ENCODE measurements at regions of chr3 and their contacts with region 1.

Region 1: DNA sequence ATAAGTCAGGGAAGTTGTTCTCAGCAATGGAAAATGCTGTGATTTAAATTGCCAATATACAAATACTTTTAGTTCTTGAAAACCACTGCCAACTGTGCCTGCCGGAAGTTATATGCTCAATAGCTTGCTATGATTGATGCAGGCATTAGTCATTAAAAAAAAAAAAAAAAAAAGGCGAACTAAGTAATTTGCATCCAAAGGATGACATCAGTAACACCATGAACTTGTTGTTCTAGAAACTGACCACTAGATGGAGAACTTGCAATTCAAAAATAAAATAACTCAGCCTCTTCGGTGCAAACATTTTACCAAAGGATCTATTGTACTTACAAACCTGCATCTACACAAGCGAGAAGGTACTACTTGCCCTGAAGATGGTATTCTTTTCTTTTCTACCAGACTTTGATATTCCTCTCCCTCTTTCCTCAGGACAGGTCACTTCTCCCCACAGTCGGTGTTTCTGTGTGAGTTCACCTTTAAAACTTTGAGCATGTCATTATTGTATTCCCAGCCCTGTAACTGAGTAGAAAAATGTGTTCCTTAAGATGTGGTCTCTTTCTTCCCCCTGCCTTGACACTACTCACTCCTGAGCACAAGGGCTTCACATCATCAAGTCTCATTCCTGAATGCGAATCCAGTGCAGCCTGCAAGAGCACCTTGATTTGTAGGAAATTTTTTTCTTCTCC is 115.0 kb upstream of the VEPH1 start:
- DNase-seq: peak; percentile 74
- H3K4me3 Mint-ChIP-seq: no peak overlapping the region
- H3K27ac Mint-ChIP-seq: no peak overlapping the region
- H3K4me1 Mint-ChIP-seq: no peaks in the 10 kb centered on the region
- H3K27me3 Mint-ChIP-seq: no peaks in the 10 kb centered on the region
- CTCF ChIP-seq: peak; percentile 41

Region 2: DNA sequence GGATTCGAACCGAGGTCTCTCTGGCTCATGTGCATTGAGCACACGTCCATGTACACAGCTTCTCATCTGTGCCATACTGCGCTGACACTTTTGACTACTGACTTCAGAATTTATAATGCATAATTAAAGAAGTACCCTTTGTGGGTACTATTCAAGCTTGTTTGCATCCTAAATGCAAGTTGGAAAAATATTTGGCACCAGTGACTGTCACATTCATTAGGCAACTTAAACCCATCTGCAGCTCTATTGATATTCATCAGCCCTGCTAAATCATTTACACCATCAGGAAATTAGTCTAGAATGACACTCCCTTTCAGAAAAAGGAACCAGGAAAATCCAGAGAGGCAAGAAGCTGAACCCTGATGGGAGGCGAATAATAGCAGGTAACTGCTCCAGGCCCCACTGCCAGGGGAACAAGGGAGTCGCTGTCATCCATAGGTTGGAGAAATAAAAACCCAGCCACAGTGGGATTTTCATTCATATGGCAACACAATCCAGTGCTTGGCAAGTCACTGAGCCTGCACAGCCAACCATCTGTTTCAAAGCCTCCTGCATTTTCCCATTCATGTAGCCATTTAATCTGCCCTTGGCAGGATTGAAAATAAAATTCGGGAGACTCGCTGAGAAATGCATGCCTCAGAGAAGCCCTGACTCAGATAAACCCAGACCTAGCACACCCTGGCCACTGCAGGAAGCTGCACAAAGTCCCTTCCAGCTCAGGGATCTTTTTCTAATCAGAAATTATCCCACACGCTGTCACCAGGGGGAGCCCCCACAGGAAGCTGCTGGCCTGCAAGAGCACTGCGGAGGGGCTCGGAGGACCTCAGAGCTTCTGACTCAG is 12.0 kb before region 1 on chr3:
- CTCF ChIA-PET with region 1: interaction called, 36 read pairs
- POLR2A ChIA-PET with region 1: no interaction called
- intact Hi-C with region 1: no loop called
- DNase-seq: peak; percentile 65
- H3K4me3 Mint-ChIP-seq: no peak overlapping the region
- H3K27ac Mint-ChIP-seq: no peak overlapping the region
- H3K4me1 Mint-ChIP-seq: no peaks in the 10 kb centered on the region
- H3K27me3 Mint-ChIP-seq: no peaks in the 10 kb centered on the region
- CTCF ChIP-seq: peak; percentile 83

Region 3: DNA sequence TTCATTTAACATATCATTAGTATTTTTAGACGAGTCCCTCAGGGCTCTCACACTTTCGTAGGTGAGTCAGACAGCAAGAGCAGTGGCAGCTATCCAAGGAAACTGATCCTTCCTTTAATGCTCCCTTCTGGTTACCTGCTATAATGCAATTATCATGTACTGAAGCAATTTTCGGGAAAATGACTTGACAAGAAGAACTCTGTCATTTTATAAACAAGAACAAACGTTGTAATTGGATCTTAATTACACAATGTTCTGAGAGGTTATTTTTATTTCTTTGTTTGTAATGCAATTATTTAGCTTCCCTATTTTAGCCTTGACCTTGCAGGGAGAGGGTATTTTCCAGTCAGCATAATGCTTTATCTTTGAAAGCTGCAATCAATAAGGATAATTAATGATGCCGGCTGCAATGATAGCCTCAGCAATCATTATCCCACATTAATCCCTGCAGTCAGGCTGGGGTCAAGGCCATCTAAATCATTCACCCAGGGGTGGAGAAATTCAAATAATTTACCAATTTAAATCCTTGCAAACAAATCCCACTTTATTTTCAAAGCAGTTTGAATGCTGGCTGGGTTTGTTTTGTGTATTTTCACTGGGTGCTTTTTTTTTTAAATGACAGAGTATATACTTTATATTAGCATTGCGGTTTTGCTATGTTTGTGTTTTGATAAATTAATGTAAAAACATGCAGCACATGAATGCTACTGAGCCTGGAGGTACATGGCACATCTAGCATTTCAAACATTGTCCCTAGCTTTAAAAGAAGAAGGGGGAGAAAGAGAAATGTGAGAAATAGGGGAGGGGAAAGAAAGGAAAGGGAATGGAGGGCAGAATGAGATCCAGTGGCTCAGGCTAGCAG is 238.1 kb after region 1 on chr3:
- CTCF ChIA-PET with region 1: interaction called, 3 read pairs
- POLR2A ChIA-PET with region 1: no interaction called
- intact Hi-C with region 1: loop called (anchors 5 kb)
- DNase-seq: peak; percentile 93
- H3K4me3 Mint-ChIP-seq: no peak overlapping the region
- H3K27ac Mint-ChIP-seq: peak overlapping the region; percentile 42
- H3K4me1 Mint-ChIP-seq: peaks cover 6% of the 10 kb centered on the region
- H3K27me3 Mint-ChIP-seq: no peaks in the 10 kb centered on the region
- CTCF ChIP-seq: peak; percentile 12

Region 4: DNA sequence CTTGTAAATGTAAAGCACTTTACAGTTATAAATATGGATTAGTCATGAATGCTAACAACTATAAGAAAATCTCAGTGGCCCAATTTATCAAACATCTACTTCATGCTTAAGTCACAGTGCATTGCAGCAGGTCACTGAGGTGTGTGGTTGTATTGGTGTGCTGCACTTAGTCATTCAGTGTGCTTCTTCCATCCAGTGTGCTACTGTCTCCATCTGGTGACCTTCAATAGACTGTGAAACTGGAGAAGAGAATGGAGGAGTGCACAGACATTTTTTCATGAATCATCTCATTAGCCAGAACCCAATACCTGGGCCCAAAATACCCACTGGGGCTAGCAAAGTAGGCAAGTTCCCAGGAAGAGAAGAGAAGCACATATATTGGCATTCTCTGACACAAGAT is 288.4 kb after region 1 on chr3:
- CTCF ChIA-PET with region 1: no interaction called
- POLR2A ChIA-PET with region 1: no interaction called
- intact Hi-C with region 1: loop called (anchors 5 kb)
- DNase-seq: peak; percentile 33
- H3K4me3 Mint-ChIP-seq: no peak overlapping the region
- H3K27ac Mint-ChIP-seq: no peak overlapping the region
- H3K4me1 Mint-ChIP-seq: no peaks in the 10 kb centered on the region
- H3K27me3 Mint-ChIP-seq: no peaks in the 10 kb centered on the region
- CTCF ChIP-seq: no peak

Region 5: DNA sequence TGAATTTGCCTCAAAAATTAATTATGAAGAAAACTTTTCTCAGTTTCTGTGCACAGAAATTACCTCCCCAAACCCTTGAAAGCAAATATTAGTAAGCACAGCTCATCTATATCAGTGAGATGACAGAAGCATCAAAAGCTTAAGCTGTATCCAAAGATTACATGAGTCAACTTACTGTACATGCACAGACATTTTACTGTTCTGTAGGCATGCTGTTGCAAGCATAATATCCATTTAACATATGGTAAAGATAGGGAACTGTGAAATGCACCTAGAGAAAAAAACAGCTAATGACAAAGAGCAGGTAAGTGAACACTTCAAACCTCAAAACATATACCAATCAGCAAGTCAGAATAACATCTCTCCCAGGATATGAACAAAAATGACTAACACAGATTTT is 467.1 kb after region 1 on chr3:
- CTCF ChIA-PET with region 1: no interaction called
- POLR2A ChIA-PET with region 1: no interaction called
- intact Hi-C with region 1: no loop called
- DNase-seq: no peak
- H3K4me3 Mint-ChIP-seq: no peak overlapping the region
- H3K27ac Mint-ChIP-seq: no peak overlapping the region
- H3K4me1 Mint-ChIP-seq: no peaks in the 10 kb centered on the region
- H3K27me3 Mint-ChIP-seq: no peaks in the 10 kb centered on the region
- CTCF ChIP-seq: no peak

Region 6: DNA sequence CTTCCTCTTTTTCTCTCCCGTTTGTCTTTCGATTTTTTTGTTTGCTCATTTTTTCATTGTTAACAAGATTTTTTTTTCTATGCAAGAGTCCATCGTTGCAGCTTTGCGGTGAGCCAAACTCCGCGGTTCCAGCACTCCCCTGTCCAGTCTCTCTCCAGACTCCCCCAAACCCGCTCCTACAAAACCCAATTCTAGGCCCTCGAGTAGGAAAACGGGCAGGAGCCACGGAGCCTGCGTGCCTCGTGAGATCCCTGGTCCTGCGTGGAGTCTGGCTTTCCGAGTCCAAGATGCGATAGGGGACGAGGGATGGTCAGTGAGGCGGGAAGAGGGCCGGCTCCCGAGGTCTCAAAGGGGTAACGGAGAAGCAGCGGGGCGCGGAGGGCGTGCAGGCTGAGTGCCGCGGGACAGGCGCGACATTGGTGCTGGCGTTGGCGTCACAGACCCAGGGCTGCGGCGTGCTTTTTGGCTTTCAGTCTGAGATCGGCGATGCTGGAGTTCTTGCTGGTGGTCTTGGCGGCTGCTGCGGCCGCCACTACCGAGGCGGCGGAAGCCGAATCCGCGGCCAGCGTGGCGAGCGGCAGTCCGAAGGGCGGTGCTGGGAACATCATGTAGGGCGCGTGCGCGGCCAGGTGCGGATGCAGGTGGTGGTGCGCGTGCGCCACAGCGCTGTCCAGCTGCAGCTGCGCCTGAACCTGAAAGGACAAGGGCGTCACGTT is 479.5 kb after region 1 on chr3:
- CTCF ChIA-PET with region 1: no interaction called
- POLR2A ChIA-PET with region 1: no interaction called
- intact Hi-C with region 1: loop called (anchors 5 kb)
- DNase-seq: peak; percentile 74
- H3K4me3 Mint-ChIP-seq: peak overlapping the region; percentile 84
- H3K27ac Mint-ChIP-seq: peak overlapping the region; percentile 58
- H3K4me1 Mint-ChIP-seq: peaks cover 6% of the 10 kb centered on the region
- H3K27me3 Mint-ChIP-seq: no peaks in the 10 kb centered on the region
- CTCF ChIP-seq: no peak

Region 7: DNA sequence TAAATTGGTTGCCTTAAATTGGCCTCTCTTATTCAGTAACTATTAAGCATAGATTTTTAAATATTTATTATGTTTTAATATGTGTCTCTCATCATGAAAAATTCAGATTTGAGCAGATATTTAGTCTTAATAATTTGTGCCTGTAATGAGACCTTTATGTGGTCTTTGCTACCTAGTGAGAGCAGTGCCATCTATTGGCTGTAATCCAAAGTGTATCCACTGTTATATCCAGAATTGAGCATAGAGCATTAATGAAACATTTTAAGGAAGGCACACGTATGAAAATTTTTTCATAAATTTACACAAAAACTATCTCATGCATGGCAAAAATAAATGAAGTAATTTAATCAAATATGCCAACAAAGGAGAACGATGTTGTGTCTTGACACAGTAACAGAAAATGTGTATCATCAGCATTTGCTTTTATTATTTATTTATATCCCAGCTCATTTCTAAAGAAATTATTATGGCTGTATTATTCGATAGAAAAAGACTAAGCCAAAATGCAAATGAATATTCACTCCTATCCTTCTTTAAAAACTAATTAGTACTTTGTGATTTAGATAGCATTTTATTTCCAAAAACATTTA is 695.2 kb after region 1 on chr3:
- CTCF ChIA-PET with region 1: no interaction called
- POLR2A ChIA-PET with region 1: no interaction called
- intact Hi-C with region 1: loop called (anchors 1 kb)
- DNase-seq: peak; percentile 52
- H3K4me3 Mint-ChIP-seq: no peak overlapping the region
- H3K27ac Mint-ChIP-seq: peak overlapping the region; percentile 25
- H3K4me1 Mint-ChIP-seq: peaks cover 5% of the 10 kb centered on the region
- H3K27me3 Mint-ChIP-seq: no peaks in the 10 kb centered on the region
- CTCF ChIP-seq: peak; percentile 38

Region 8: DNA sequence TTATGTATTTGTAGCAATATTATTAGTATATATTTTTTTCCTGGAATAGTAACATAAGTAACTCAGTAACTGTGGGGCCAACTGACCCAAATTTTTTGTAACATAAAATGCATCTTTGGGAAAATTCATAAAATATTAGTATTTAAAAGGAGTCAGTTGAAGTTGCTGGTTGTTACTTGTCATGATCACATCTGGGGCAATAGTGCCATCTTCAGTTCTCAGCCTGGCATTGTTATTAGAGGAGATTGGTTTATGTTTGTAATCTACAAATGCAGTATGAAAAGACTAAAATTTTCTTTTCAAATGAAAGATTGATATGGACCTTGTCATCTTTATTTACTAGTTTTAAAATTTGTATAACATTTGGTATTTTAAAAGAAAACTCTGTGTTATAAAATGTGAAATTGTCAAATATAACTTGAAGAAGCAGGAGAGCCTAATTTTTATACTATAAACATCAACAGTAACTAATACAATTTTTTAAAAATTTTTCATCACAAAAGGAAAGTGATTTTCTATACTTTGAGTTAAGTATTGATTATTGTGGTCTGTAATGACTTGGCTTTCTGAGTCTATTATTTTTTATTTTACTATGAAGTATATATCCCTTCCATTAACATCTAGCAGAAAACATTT is 914.0 kb after region 1 on chr3:
- CTCF ChIA-PET with region 1: interaction called, 6 read pairs
- POLR2A ChIA-PET with region 1: no interaction called
- intact Hi-C with region 1: loop called (anchors 1 kb)
- DNase-seq: peak; percentile 77
- H3K4me3 Mint-ChIP-seq: no peak overlapping the region
- H3K27ac Mint-ChIP-seq: no peak overlapping the region
- H3K4me1 Mint-ChIP-seq: peaks cover 7% of the 10 kb centered on the region
- H3K27me3 Mint-ChIP-seq: no peaks in the 10 kb centered on the region
- CTCF ChIP-seq: peak; percentile 64

Measured in MCF 10A (cell line).